ENCODE measurements at regions of chr12 and their contacts with region 1.

Region 1: DNA sequence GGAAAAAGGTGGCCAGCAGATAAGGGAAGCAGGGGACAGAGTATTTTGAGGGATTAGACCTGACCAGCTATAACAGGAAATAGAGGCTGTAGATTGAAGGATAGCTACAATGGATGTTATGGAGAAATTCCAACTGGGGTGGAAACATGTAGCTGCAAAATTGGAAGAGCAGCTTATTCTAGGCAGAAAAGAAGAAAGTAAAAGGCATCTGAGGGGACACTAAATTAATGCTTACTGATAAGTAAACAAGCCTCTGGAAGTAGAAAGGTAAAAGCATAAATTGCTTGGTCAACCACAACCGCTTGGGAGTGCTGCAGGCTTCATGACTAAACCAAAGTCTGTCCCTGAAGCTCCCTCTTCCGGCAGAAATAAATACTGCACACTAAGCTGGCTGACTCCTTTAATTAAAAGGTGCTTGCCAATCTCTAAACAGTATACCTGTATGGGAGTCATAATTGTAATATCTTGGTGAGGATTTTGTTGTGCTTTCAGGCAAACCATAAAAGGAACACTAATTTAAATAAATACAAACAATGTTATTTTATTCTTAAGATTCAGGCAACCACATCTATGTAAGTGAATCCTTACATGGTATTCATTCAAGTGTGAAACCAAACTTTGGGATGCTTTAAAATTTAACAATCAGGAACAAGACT is 7.7 kb downstream of the UBC start:
- DNase-seq: peak; percentile 98
- H3K4me3 Mint-ChIP-seq: no peak overlapping the region
- H3K27ac Mint-ChIP-seq: peak overlapping the region; percentile 12
- H3K4me1 Mint-ChIP-seq: peaks cover 19% of the 10 kb centered on the region
- H3K27me3 Mint-ChIP-seq: no peaks in the 10 kb centered on the region

Region 2: GRCh38 chr12:124745891-124746570 is 160.7 kb before region 1 on chr12:
- CTCF ChIA-PET with region 1: no interaction called
- intact Hi-C with region 1: no loop called
- DNase-seq: peak; percentile 53
- H3K4me3 Mint-ChIP-seq: no peak overlapping the region
- H3K27ac Mint-ChIP-seq: no peak overlapping the region
- H3K4me1 Mint-ChIP-seq: peaks cover 16% of the 10 kb centered on the region
- H3K27me3 Mint-ChIP-seq: peaks cover 7% of the 10 kb centered on the region

Region 3: GRCh38 chr12:124863416-124864325 is 43.1 kb before region 1 on chr12 and contains the start of gene SCARB1:
- CTCF ChIA-PET with region 1: interaction called, 3 read pairs
- intact Hi-C with region 1: loop called (anchors 2 kb)
- DNase-seq: peak; percentile 79
- H3K4me3 Mint-ChIP-seq: peak within 1 kb of the TSS; percentile 78
- H3K27ac Mint-ChIP-seq: peak within 1 kb of the TSS; percentile 84
- H3K4me1 Mint-ChIP-seq: peaks cover 16% of the 10 kb centered on the region
- H3K27me3 Mint-ChIP-seq: peaks cover 1% of the 10 kb centered on the region
- total RNA-seq, gene SCARB1: 18.2 to 18.3 TPM

Region 4: GRCh38 chr12:125015680-125016310 is 109.1 kb after region 1 on chr12:
- CTCF ChIA-PET with region 1: no interaction called
- intact Hi-C with region 1: no loop called
- DNase-seq: no peak
- H3K4me3 Mint-ChIP-seq: no peak overlapping the region
- H3K27ac Mint-ChIP-seq: no peak overlapping the region
- H3K4me1 Mint-ChIP-seq: no peaks in the 10 kb centered on the region
- H3K27me3 Mint-ChIP-seq: no peaks in the 10 kb centered on the region

Region 5: DNA sequence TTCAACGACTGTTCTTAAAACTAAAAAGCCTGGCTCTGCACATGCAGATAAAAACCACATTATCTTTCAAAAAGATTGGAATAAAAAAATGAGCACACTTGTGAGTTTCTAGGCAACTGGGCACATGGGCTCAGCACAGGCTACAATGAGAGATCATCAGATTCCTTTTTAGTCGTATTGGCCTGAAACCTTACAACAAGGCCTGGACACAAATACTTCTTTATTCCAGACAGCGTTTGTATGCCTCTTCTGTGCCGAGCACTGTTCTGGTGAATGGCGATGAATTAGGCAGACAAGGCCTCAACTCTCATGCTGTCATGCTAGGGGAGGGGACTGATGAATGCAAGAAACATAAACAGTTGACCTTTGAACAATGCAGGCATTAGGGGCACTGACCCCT is 621.5 kb after region 1 on chr12:
- CTCF ChIA-PET with region 1: no interaction called
- intact Hi-C with region 1: no loop called
- DNase-seq: no peak
- H3K4me3 Mint-ChIP-seq: no peak overlapping the region
- H3K27ac Mint-ChIP-seq: no peak overlapping the region
- H3K4me1 Mint-ChIP-seq: no peaks in the 10 kb centered on the region
- H3K27me3 Mint-ChIP-seq: peaks cover 5% of the 10 kb centered on the region

Measured in activated naive CD4-positive, alpha-beta T cell treated with anti-CD3 and anti-CD28 coated beads for 36 hours (primary cell).